GM12878 (cell line): ENCODE measurements at regions of chr2 and their contacts with region 1.

Region 1: DNA sequence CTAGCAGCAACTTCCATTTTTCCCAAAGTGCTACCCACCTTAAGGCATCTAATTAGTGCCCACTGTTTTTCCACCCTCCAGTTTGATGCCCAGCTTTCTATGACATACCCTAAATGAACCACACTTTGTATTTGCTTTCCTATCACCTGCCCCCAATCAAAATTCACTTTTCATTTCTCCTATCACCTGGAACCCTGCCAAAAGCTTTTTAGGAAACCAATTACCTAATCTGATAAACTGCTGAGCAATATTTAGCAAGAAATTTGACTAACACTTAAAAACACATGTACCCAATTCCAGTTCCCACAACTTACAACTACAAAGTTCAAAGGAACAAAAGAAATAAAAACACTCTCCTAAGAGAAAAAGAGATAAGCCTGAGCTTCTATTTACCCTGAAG is 71.7 kb downstream of the IKZF2 start:
- DNase-seq: no peak
- ATAC-seq: no peak
- H3K4me3 ChIP-seq: no peak overlapping the region
- H3K27ac ChIP-seq: no peak overlapping the region
- H3K4me1 ChIP-seq: no peaks in the 10 kb centered on the region
- H3K27me3 ChIP-seq: no peaks in the 10 kb centered on the region
- CTCF ChIP-seq: no peak
- EP300 ChIP-seq: no peak
- POLR2A ChIP-seq: no peak
- RAD21 ChIP-seq: no peak

Region 2: GRCh38 chr2:213057977-213058376 is 21.8 kb before region 1 on chr2:
- CTCF ChIA-PET with region 1: no interaction called
- POLR2A ChIA-PET with region 1: no interaction called
- RAD21 ChIA-PET with region 1: no interaction called
- SMC1A ChIA-PET with region 1: no interaction called
- in situ Hi-C with region 1: no loop called
- intact Hi-C with region 1: no loop called
- DNase-seq: no peak
- ATAC-seq: peak; percentile 41
- H3K4me3 ChIP-seq: no peak overlapping the region
- H3K27ac ChIP-seq: no peak overlapping the region
- H3K4me1 ChIP-seq: no peaks in the 10 kb centered on the region
- H3K27me3 ChIP-seq: no peaks in the 10 kb centered on the region
- CTCF ChIP-seq: no peak
- EP300 ChIP-seq: no peak
- POLR2A ChIP-seq: no peak
- RAD21 ChIP-seq: no peak

Region 3: GRCh38 chr2:213069531-213069930 is 10.2 kb before region 1 on chr2:
- CTCF ChIA-PET with region 1: interaction called, 3 read pairs
- POLR2A ChIA-PET with region 1: interaction called, 8 read pairs
- RAD21 ChIA-PET with region 1: no interaction called
- SMC1A ChIA-PET with region 1: interaction called, 32 read pairs
- in situ Hi-C with region 1: no loop called
- intact Hi-C with region 1: no loop called
- DNase-seq: no peak
- ATAC-seq: no peak
- H3K4me3 ChIP-seq: no peak overlapping the region
- H3K27ac ChIP-seq: no peak overlapping the region
- H3K4me1 ChIP-seq: peaks cover 3% of the 10 kb centered on the region; the same call in 1 of the 2 replicates
- H3K27me3 ChIP-seq: no peaks in the 10 kb centered on the region
- CTCF ChIP-seq: no peak
- EP300 ChIP-seq: no peak
- POLR2A ChIP-seq: no peak
- RAD21 ChIP-seq: no peak